Natural killer cell (primary cell): ENCODE measurements at regions of chr19 and their contacts with region 1.

Region 1: GRCh38 chr19:55653758-55654539 is 886 bp upstream of the U2AF2 start:
- DNase-seq: peak; percentile 99 to 100
- ATAC-seq: peak; percentile 75 to 87 (median 75)
- H3K4me3 ChIP-seq: peak overlapping the region; percentile 65
- H3K4me3 Mint-ChIP-seq: peak overlapping the region; percentile 100
- H3K27ac ChIP-seq: peak overlapping the region; percentile 100
- H3K27ac Mint-ChIP-seq: peak overlapping the region; percentile 99 to 100
- H3K4me1 ChIP-seq: peaks cover 50% of the 10 kb centered on the region
- H3K4me1 Mint-ChIP-seq: peaks cover 40 to 53% of the 10 kb centered on the region in 2 donors
- H3K27me3 ChIP-seq: no peaks in the 10 kb centered on the region
- H3K27me3 Mint-ChIP-seq: peaks cover 0 to 7% of the 10 kb centered on the region in 2 donors
- CTCF ChIP-seq: peak; percentile 99

Region 2: DNA sequence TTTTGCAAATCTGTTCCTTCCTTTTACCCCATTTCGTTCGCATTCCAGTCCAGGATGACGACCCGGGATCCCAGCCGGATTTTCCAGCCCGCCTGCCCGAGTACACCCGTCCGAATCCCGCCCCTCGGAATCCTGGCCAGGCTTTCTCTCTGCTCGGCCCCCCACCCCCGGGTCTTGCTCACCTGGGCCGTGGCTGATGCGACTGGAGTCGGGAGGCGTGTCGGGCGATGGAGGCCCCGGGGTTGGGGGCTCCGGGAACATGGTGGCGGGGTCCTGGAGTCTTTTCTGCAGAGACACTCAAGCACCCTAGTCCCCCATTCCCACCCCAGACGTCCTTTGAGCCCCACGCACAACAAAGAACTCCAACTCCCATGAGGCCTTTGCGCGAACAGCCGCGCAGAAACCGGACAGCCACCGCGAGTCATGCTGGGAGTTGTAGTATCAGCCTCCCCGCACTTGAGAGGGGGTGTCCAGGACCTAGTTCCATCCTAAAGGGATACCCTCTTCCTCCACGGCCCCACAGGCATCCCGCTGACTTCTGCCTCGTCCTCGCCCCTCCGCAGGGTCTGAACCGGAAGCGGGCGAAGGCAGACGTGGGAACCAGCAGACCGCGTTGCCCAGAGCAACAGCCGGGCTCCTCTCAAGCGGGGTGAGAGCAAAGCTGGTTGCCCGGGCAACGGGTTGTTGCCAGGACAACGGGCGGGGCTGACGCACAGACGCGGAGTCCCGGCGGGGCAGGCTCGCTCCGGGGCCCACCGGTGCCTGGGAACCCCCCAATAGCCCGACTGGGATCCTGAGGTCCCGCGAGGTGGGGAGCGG is 475.0 kb before region 1 on chr19:
- intact Hi-C with region 1: loop called (anchors 5 kb)
- DNase-seq: peak; percentile 98
- ATAC-seq: peak; percentile 82 to 92 (median 87)
- H3K4me3 ChIP-seq: peak overlapping the region; percentile 22
- H3K4me3 Mint-ChIP-seq: peak overlapping the region; percentile 80
- H3K27ac ChIP-seq: no peak overlapping the region
- H3K27ac Mint-ChIP-seq: peak overlapping the region; percentile 84 to 94
- H3K4me1 ChIP-seq: peaks cover 29% of the 10 kb centered on the region
- H3K4me1 Mint-ChIP-seq: peaks cover 12 to 31% of the 10 kb centered on the region in 2 donors
- H3K27me3 ChIP-seq: peaks cover 46% of the 10 kb centered on the region
- H3K27me3 Mint-ChIP-seq: peaks cover 31 to 44% of the 10 kb centered on the region in 2 donors
- CTCF ChIP-seq: no peak

Region 3: GRCh38 chr19:55516878-55517620 is 136.9 kb before region 1 on chr19:
- intact Hi-C with region 1: loop called (anchors 1 kb)
- DNase-seq: peak; percentile 91 to 95
- ATAC-seq: peak; percentile 100
- H3K4me3 ChIP-seq: peak overlapping the region; percentile 16
- H3K4me3 Mint-ChIP-seq: peak overlapping the region; percentile 51
- H3K27ac ChIP-seq: peak overlapping the region; percentile 73
- H3K27ac Mint-ChIP-seq: peak overlapping the region in 1 of 2 donors; percentile 89
- H3K4me1 ChIP-seq: peaks cover 10% of the 10 kb centered on the region
- H3K4me1 Mint-ChIP-seq: peaks cover 0 to 8% of the 10 kb centered on the region in 2 donors
- H3K27me3 ChIP-seq: no peaks in the 10 kb centered on the region
- H3K27me3 Mint-ChIP-seq: no peaks in the 10 kb centered on the region
- CTCF ChIP-seq: peak; percentile 74

Region 4: DNA sequence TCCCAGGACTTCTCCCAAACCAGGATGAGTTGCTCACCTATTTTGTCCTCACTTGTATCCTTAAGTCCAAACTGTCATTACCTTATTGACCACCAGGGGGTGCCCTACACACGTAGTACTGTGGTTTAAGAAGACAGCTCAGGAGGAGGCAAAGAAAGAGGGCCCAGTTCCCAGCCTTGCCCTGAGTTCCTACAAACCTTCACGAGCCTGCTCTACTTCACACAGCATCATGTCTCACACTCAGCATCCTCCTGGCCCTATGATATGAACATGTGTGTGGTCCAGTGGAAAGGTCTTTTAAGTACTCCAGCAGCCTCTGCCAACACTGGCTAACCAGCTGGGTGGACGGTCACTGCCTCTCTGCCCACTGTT is 21.5 kb before region 1 on chr19:
- intact Hi-C with region 1: loop called (anchors 1 kb)
- DNase-seq: peak; percentile 74 to 97
- ATAC-seq: peak; percentile 62 to 83 (median 63)
- H3K4me3 ChIP-seq: no peak overlapping the region
- H3K4me3 Mint-ChIP-seq: peak overlapping the region; percentile 11
- H3K27ac ChIP-seq: no peak overlapping the region
- H3K27ac Mint-ChIP-seq: peak overlapping the region; percentile 15 to 77
- H3K4me1 ChIP-seq: peaks cover 39% of the 10 kb centered on the region
- H3K4me1 Mint-ChIP-seq: peaks cover 34 to 40% of the 10 kb centered on the region in 2 donors
- H3K27me3 ChIP-seq: no peaks in the 10 kb centered on the region
- H3K27me3 Mint-ChIP-seq: no peaks in the 10 kb centered on the region
- CTCF ChIP-seq: peak; percentile 75

Region 5: GRCh38 chr19:55674841-55675660 is 21.1 kb after region 1 on chr19 and contains the start of gene EPN1:
- intact Hi-C with region 1: loop called (anchors 2 kb)
- DNase-seq: peak; percentile 90 to 99
- ATAC-seq: peak; percentile 90 to 96 (median 92)
- H3K4me3 ChIP-seq: peak within 1 kb of the TSS; percentile 85
- H3K4me3 Mint-ChIP-seq: peak within 1 kb of the TSS; percentile 93
- H3K27ac ChIP-seq: peak within 1 kb of the TSS; percentile 93
- H3K27ac Mint-ChIP-seq: peak within 1 kb of the TSS; percentile 88 to 99
- H3K4me1 ChIP-seq: peaks cover 58% of the 10 kb centered on the region
- H3K4me1 Mint-ChIP-seq: peaks cover 57 to 63% of the 10 kb centered on the region in 2 donors
- H3K27me3 ChIP-seq: no peaks in the 10 kb centered on the region
- H3K27me3 Mint-ChIP-seq: no peaks in the 10 kb centered on the region
- CTCF ChIP-seq: no peak
- total RNA-seq, gene EPN1: 47.6 to 56.4 (median 51.8) TPM

Region 6: GRCh38 chr19:55738302-55738701 is 84.4 kb after region 1 on chr19 and contains the start of gene NLRP9:
- intact Hi-C with region 1: no loop called
- DNase-seq: no peak
- ATAC-seq: no peak
- H3K4me3 ChIP-seq: no peak within 1 kb of the TSS
- H3K4me3 Mint-ChIP-seq: no peak within 1 kb of the TSS
- H3K27ac ChIP-seq: no peak within 1 kb of the TSS
- H3K27ac Mint-ChIP-seq: no peak within 1 kb of the TSS
- H3K4me1 ChIP-seq: no peaks in the 10 kb centered on the region
- H3K4me1 Mint-ChIP-seq: no peaks in the 10 kb centered on the region
- H3K27me3 ChIP-seq: no peaks in the 10 kb centered on the region
- H3K27me3 Mint-ChIP-seq: peaks cover 3 to 9% of the 10 kb centered on the region in 2 donors
- CTCF ChIP-seq: no peak
- total RNA-seq, gene NLRP9: not detected

Region 7: DNA sequence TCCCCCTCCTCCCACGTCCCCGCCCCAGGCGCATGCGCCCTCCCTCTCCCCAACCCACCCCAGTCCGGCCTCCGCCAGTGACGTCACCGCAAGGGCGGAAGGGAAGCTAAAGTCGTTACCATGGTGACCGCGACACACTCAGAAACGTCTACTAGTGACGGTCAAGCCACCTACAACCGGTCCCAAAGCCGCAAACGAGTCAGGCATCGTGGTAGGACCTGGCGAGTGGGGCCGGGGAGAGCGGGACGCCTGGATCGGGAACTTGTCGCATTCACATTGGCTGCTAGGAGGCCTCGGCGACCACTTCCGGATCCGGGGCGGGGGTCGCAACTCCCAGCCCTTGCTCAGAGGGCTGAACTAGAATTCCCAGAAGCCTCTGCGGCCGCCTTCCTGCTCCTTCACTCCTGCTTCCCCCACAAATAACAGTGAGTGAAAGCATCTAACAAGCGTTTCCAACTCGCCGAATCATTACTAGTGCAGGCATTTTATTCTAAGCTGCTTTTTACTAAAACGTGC is 660.7 kb after region 1 on chr19 and contains the start of gene ZSCAN5A:
- intact Hi-C with region 1: loop called (anchors 10 kb)
- DNase-seq: peak; percentile 94 to 98
- ATAC-seq: peak; percentile 77 to 89 (median 83)
- H3K4me3 ChIP-seq: peak within 1 kb of the TSS; percentile 77
- H3K4me3 Mint-ChIP-seq: peak within 1 kb of the TSS; percentile 98
- H3K27ac ChIP-seq: peak within 1 kb of the TSS; percentile 94
- H3K27ac Mint-ChIP-seq: peak within 1 kb of the TSS; percentile 97 to 98
- H3K4me1 ChIP-seq: peaks cover 13% of the 10 kb centered on the region
- H3K4me1 Mint-ChIP-seq: peaks cover 21 to 38% of the 10 kb centered on the region in 2 donors
- H3K27me3 ChIP-seq: no peaks in the 10 kb centered on the region
- H3K27me3 Mint-ChIP-seq: peaks cover 0 to under 1% of the 10 kb centered on the region in 2 donors
- CTCF ChIP-seq: no peak
- total RNA-seq, gene ZSCAN5A: 6.7 to 10.2 (median 7.9) TPM